Activated CD4-positive, alpha-beta T cell treated with anti-CD3 and anti-CD28 coated beads, Interleukin-2, amount 10 ng/mL, durations not matched to agents 24 days and 14 days (primary cell): ENCODE measurements at regions of chr14 and their contacts with region 1.

Region 1: GRCh38 chr14:81474148-81474492 is 59.5 kb downstream of the SEL1L start:
- DNase-seq: peak; percentile 71
- H3K4me3 Mint-ChIP-seq: peak overlapping the region; percentile 68
- H3K27ac Mint-ChIP-seq: peak overlapping the region; percentile 88
- H3K4me1 Mint-ChIP-seq: peaks cover 55% of the 10 kb centered on the region
- H3K27me3 Mint-ChIP-seq: no peaks in the 10 kb centered on the region

Region 2: DNA sequence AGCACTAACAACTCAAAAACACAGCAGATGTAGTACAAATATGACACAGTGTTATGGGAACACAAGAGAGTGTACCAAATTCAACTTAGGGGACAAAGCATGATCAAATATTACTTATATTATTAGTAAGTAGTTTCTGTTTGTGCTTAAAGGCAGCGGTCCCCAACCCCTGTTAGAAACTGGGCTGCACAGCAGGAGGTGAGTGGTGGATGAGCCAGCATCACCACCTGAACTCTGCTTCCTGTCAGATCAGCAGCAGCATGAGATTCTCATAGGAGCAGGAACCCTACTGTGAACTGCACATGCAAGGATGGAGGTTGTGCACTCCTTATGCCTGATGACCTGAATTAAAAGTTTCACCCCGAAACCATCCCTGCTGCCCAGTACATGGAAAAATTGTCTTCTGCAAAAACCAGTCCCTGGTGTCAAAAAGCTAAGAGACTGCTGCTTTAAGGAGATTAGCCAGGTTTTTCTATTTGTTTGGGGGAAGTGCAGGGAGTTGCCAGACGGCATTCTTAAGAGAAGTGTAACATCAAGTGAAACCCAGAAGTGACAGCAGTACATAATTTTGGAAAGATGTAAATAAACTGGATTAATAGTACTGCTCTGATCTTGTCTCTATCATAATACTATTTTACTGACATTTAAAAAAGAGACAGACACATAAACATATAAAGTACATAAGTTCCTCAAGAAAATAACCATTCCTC is 280.0 kb before region 1 on chr14:
- intact Hi-C with region 1: no loop called
- DNase-seq: peak; percentile 63
- H3K4me3 Mint-ChIP-seq: no peak overlapping the region
- H3K27ac Mint-ChIP-seq: peak overlapping the region; percentile 57
- H3K4me1 Mint-ChIP-seq: peaks cover 32% of the 10 kb centered on the region
- H3K27me3 Mint-ChIP-seq: no peaks in the 10 kb centered on the region

Region 3: GRCh38 chr14:81400852-81401251 is 73.3 kb before region 1 on chr14:
- intact Hi-C with region 1: loop called (anchors 5 kb)
- DNase-seq: no peak
- H3K4me3 Mint-ChIP-seq: no peak overlapping the region
- H3K27ac Mint-ChIP-seq: peak overlapping the region; percentile 56
- H3K4me1 Mint-ChIP-seq: peaks cover 18% of the 10 kb centered on the region
- H3K27me3 Mint-ChIP-seq: peaks cover 13% of the 10 kb centered on the region

Region 4: GRCh38 chr14:81427348-81428058 is 46.6 kb before region 1 on chr14:
- intact Hi-C with region 1: no loop called
- DNase-seq: no peak
- H3K4me3 Mint-ChIP-seq: no peak overlapping the region
- H3K27ac Mint-ChIP-seq: no peak overlapping the region
- H3K4me1 Mint-ChIP-seq: no peaks in the 10 kb centered on the region
- H3K27me3 Mint-ChIP-seq: peaks cover 25% of the 10 kb centered on the region

Region 5: GRCh38 chr14:81533536-81534343 is 59.6 kb after region 1 on chr14 and contains the start of gene SEL1L:
- intact Hi-C with region 1: loop called (anchors 1 kb)
- DNase-seq: peak; percentile 100
- H3K4me3 Mint-ChIP-seq: peak within 1 kb of the TSS; percentile 98
- H3K27ac Mint-ChIP-seq: peak within 1 kb of the TSS; percentile 91
- H3K4me1 Mint-ChIP-seq: peaks cover 33% of the 10 kb centered on the region
- H3K27me3 Mint-ChIP-seq: peaks cover 3% of the 10 kb centered on the region
- total RNA-seq, gene SEL1L: 57.4 and 58.8 TPM in 2 replicates